WTC11 (cell line): ENCODE measurements at regions of chr5 and their contacts with region 1.

Region 1: GRCh38 chr5:152349683-152350526 is 55.2 kb downstream of the NMUR2 start:
- DNase-seq: peak; percentile 61
- ATAC-seq: peak; percentile 94
- H3K4me3 Mint-ChIP-seq: no peak overlapping the region
- H3K27ac Mint-ChIP-seq: no peak overlapping the region
- H3K4me1 Mint-ChIP-seq: peaks cover 7% of the 10 kb centered on the region
- H3K27me3 Mint-ChIP-seq: peaks cover 3% of the 10 kb centered on the region; the same call in 1 of the 2 replicates
- CTCF ChIP-seq: peak; percentile 83

Region 2: DNA sequence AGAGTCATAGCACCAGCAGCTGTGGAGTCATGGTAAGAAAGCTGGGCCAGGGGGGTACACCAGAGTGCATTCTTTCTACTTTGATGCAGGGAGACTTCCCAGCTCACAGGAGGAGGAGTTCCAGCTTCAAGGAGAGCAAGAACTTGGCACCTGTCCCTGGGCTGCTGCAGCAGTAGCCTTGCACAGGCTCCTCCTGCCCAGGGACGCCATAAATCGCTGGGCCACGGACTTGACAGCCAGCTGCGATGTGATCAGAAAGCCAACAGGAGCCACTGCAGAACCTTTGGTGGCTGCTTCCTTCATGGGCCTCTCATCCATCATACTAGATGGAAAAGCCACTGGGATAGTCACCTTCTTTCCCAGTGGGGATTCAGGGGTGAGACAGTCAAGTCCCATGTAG is 179.6 kb before region 1 on chr5:
- CTCF ChIA-PET with region 1: no interaction called
- POLR2A ChIA-PET with region 1: no interaction called
- DNase-seq: peak; percentile 15
- ATAC-seq: peak; percentile 34; the same call in 1 of the 2 replicates
- H3K4me3 Mint-ChIP-seq: no peak overlapping the region
- H3K27ac Mint-ChIP-seq: no peak overlapping the region
- H3K4me1 Mint-ChIP-seq: peaks cover 46% of the 10 kb centered on the region
- H3K27me3 Mint-ChIP-seq: no peaks in the 10 kb centered on the region; the same call in 1 of the 2 replicates
- CTCF ChIP-seq: no peak

Region 3: GRCh38 chr5:152230082-152230481 is 119.8 kb before region 1 on chr5:
- CTCF ChIA-PET with region 1: no interaction called
- POLR2A ChIA-PET with region 1: no interaction called
- DNase-seq: no peak
- ATAC-seq: no peak
- H3K4me3 Mint-ChIP-seq: no peak overlapping the region
- H3K27ac Mint-ChIP-seq: no peak overlapping the region
- H3K4me1 Mint-ChIP-seq: no peaks in the 10 kb centered on the region
- H3K27me3 Mint-ChIP-seq: no peaks in the 10 kb centered on the region
- CTCF ChIP-seq: no peak

Region 4: DNA sequence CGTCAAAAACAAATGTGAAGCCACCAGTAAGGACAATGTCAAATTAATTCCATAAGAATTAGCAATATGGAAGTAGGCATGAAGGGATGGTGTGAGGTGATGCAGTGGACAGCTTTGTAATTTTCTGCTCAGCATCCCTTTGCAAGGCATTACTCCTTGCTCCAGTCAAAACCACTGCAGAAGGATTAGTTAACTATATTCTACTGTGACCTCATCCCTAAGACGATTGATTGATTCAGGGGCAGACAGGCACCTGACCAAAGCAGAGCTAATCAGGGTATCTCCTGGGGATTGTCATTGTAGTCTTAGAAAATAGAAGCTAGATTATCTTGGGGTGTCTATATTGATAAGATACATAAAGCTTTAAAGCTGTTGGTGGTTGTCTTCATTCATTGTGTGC is 43.5 kb before region 1 on chr5:
- CTCF ChIA-PET with region 1: no interaction called
- POLR2A ChIA-PET with region 1: no interaction called
- DNase-seq: no peak
- ATAC-seq: no peak
- H3K4me3 Mint-ChIP-seq: no peak overlapping the region
- H3K27ac Mint-ChIP-seq: no peak overlapping the region
- H3K4me1 Mint-ChIP-seq: no peaks in the 10 kb centered on the region
- H3K27me3 Mint-ChIP-seq: peaks cover 3% of the 10 kb centered on the region; the same call in 1 of the 2 replicates
- CTCF ChIP-seq: no peak

Region 5: GRCh38 chr5:152335870-152336269 is 14.0 kb before region 1 on chr5:
- CTCF ChIA-PET with region 1: interaction called, 11 read pairs
- POLR2A ChIA-PET with region 1: no interaction called
- DNase-seq: no peak
- ATAC-seq: no peak
- H3K4me3 Mint-ChIP-seq: no peak overlapping the region
- H3K27ac Mint-ChIP-seq: no peak overlapping the region
- H3K4me1 Mint-ChIP-seq: peaks cover 10% of the 10 kb centered on the region; the same call in 1 of the 2 replicates
- H3K27me3 Mint-ChIP-seq: peaks cover 3% of the 10 kb centered on the region; the same call in 1 of the 2 replicates
- CTCF ChIP-seq: no peak

Region 6: DNA sequence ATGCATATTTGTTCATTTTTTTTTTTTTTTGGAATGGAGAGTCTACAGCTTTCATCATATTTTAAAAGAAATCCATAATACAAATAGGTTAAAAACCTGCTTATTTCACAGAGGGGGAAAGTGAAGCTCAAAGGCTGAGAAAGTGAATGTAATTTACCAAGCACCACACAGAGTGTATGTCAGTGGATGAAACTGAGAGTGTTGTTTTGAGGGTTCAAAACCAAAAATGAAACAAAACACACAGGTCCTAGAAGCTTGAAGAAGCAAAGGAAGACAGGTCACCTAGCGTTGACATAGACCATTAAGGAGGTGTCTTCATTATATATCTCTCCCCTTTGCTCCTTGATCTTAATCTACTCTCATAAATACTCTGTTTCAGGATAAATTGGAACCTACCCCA is 47.7 kb after region 1 on chr5:
- CTCF ChIA-PET with region 1: no interaction called
- POLR2A ChIA-PET with region 1: no interaction called
- DNase-seq: no peak
- ATAC-seq: no peak
- H3K4me3 Mint-ChIP-seq: no peak overlapping the region
- H3K27ac Mint-ChIP-seq: no peak overlapping the region
- H3K4me1 Mint-ChIP-seq: 0 out of 2 replicates have a peak, but pooled peaks cover 1% of the 10 kb centered on the region
- H3K27me3 Mint-ChIP-seq: no peaks in the 10 kb centered on the region
- CTCF ChIP-seq: no peak

Region 7: DNA sequence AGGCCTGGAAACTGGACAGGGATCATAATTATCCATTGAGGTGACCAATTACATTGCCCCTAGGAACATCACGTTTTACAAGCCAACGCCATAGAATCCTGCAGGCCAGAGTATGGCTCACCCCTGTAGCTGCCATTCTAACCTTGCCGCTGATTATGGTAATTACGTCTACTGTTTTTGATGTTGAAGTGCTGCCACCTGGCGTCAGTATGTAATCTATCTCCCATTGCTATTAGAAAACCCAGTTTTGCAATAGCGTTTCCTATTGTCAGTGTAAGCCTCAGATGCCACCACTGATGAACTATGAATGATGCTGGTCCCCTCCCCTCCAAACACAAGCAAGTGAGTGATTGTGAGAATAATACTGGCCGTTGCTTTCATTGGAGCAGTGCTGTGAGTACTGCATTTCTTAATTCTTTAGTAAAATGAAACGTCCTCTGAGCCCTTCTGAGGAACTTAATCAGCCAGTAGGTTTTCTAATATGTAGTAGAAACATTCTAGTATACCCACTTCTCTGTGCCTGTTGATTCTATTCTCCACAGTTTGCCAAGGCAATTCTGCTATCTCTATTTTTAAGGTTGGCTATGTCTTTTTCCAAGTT is 155.6 kb after region 1 on chr5:
- CTCF ChIA-PET with region 1: interaction called, 15 read pairs
- POLR2A ChIA-PET with region 1: no interaction called
- DNase-seq: peak; percentile 61
- ATAC-seq: peak; percentile 96
- H3K4me3 Mint-ChIP-seq: no peak overlapping the region
- H3K27ac Mint-ChIP-seq: no peak overlapping the region
- H3K4me1 Mint-ChIP-seq: 0 out of 2 replicates have a peak, but pooled peaks cover 3% of the 10 kb centered on the region
- H3K27me3 Mint-ChIP-seq: peaks cover 14% of the 10 kb centered on the region
- CTCF ChIP-seq: peak; percentile 52